ENCODE measurements at regions of chr9 and their contacts with region 1.

Region 1: DNA sequence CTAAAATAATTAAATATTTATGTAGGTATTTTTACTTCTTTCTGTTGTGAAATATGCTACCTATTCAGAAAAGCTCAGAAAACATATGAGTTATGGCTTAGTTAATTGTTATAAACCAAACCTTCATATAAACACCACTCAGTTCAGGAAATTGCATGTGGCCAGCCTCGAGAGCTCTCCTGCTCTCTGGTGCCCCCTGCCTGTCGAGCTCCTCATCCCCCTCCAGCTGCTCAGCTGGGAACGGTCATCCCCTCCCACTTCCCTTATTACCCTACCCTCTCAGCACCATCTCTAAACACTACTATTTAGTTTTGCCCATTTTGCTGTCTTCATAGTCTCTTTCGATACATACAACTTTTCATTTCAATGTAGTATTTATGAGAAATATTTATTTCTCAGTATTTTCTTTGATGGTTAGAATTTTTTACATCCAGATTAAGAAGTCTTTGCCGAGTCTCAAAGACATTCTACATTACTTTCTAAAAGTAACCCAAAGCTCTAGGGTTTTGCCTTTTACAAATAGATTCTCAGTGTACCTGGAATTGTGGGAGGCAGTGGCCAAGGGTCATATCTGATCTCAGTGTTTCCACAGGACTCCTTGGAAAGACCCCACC is 51.2 kb upstream of the SEMA4D start:
- DNase-seq: peak; percentile 75 to 93 (median 84)
- ATAC-seq: peak; percentile 99
- H3K4me3 ChIP-seq: no peak overlapping the region
- H3K4me3 Mint-ChIP-seq: no peak overlapping the region
- H3K27ac ChIP-seq: no peak overlapping the region
- H3K27ac Mint-ChIP-seq: peak overlapping the region; percentile 40
- H3K4me1 ChIP-seq: peaks cover 15% of the 10 kb centered on the region
- H3K4me1 Mint-ChIP-seq: peaks cover 26% of the 10 kb centered on the region
- H3K27me3 ChIP-seq: no peaks in the 10 kb centered on the region
- H3K27me3 Mint-ChIP-seq: no peaks in the 10 kb centered on the region
- CTCF ChIP-seq: peak; percentile 99

Region 2: GRCh38 chr9:89375191-89375760 is 173.9 kb before region 1 on chr9:
- CTCF ChIA-PET with region 1: interaction called, 11 read pairs
- POLR2A ChIA-PET with region 1: interaction called, 3 read pairs
- intact Hi-C with region 1: loop called (anchors 1 to 2 kb)
- DNase-seq: peak in 3 of 14 experiments; percentile 32 to 66 (median 40)
- ATAC-seq: no peak
- H3K4me3 ChIP-seq: no peak overlapping the region
- H3K4me3 Mint-ChIP-seq: no peak overlapping the region
- H3K27ac ChIP-seq: peak overlapping the region; percentile 27 to 35
- H3K27ac Mint-ChIP-seq: peak overlapping the region; percentile 71
- H3K4me1 ChIP-seq: peaks cover 49% of the 10 kb centered on the region
- H3K4me1 Mint-ChIP-seq: peaks cover 33% of the 10 kb centered on the region
- H3K27me3 ChIP-seq: no peaks in the 10 kb centered on the region
- H3K27me3 Mint-ChIP-seq: no peaks in the 10 kb centered on the region
- CTCF ChIP-seq: no peak

Region 3: DNA sequence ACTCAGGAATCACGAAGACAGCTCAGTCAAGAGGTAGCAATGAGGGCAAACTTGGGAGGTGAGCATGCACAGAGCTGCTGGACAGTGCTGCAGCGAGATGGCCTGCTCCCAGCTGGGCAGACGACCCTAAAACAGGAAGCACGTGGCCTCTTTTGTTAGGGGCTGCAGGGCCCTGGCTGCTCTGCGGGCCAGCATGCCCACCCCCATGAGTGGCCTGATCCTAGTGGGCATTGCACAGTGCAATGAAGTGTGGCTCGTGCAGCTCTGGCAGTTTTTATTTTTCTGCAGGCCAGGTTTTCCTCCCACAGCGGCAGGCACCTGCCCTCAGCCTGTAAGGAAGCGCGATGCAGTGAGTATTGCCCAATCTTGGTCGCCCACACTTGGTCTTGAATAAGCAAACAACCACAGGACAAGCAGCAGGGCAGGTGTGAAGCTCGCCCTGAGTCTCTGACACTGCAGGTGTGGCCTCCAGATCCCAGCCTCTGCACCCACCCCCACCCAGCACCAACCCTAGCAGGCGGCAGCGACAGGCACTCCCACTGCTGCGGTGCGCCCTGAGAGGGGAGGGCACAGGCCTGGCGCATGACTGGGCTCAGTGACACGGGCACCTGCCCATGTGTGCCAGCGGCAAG is 112.0 kb before region 1 on chr9:
- CTCF ChIA-PET with region 1: interaction called, 156 read pairs
- POLR2A ChIA-PET with region 1: interaction called, 3 read pairs
- intact Hi-C with region 1: no loop called
- DNase-seq: peak; percentile 37 to 90 (median 66)
- ATAC-seq: peak; percentile 92
- H3K4me3 ChIP-seq: peak overlapping the region; percentile 6
- H3K4me3 Mint-ChIP-seq: peak overlapping the region; percentile 82
- H3K27ac ChIP-seq: peak overlapping the region; percentile 0 to 57
- H3K27ac Mint-ChIP-seq: peak overlapping the region; percentile 96
- H3K4me1 ChIP-seq: peaks cover 99% of the 10 kb centered on the region
- H3K4me1 Mint-ChIP-seq: peaks cover 92% of the 10 kb centered on the region
- H3K27me3 ChIP-seq: no peaks in the 10 kb centered on the region
- H3K27me3 Mint-ChIP-seq: no peaks in the 10 kb centered on the region
- CTCF ChIP-seq: no peak

Region 4: GRCh38 chr9:89461265-89461664 is 87.9 kb before region 1 on chr9:
- CTCF ChIA-PET with region 1: interaction called, 20 read pairs
- POLR2A ChIA-PET with region 1: interaction called, 24 read pairs
- intact Hi-C with region 1: no loop called
- DNase-seq: peak in 4 of 14 experiments; percentile 28 to 63 (median 56)
- ATAC-seq: peak; percentile 14
- H3K4me3 ChIP-seq: no peak overlapping the region
- H3K4me3 Mint-ChIP-seq: peak overlapping the region; percentile 71
- H3K27ac ChIP-seq: peak overlapping the region; percentile 50 to 62
- H3K27ac Mint-ChIP-seq: peak overlapping the region; percentile 96
- H3K4me1 ChIP-seq: peaks cover 97% of the 10 kb centered on the region
- H3K4me1 Mint-ChIP-seq: peaks cover 97% of the 10 kb centered on the region
- H3K27me3 ChIP-seq: no peaks in the 10 kb centered on the region
- H3K27me3 Mint-ChIP-seq: no peaks in the 10 kb centered on the region
- CTCF ChIP-seq: no peak

Region 5: DNA sequence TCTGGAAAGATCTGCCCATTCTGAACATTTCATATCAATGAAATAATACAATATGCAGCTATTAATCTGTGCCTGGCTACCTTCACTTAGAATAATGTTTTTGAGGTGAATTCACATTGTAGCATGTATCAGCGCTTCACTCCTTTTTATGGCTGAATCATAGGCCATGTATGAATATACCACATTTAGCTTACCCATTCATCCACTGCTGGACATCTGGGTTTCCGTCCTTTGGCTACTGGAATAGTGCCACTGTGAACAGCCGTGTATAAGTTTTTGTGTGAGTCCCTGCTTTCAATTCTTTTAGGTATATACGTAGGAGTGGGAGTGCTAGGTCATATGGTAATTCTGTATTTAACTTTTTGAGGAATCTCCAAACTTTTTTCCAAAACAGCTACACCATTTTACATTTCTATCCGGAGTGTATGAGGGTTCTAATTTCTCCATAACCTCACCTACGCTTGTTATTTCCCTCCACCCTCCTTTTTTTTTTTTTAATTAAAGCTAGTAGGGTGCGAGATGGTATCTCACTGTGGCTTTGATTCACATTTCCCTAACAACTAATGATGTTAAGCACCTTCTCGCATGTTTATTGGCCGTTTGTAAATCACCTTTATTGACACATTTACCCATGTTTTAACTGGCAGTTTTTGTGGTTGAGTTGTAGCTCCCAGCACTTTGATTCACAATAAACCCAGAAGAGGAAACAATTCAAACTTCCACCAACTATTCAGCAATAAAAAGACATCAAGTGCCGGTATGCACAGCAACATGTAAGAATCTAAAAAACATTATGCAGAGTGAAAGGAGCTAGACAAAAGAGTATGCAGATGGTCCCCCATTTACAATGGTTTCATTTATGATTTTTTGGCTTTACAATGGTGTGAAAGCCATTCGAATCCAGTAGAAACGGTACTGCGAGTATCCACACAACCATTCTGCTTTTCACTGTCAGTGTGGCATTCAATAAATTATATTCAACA is 59.3 kb before region 1 on chr9:
- CTCF ChIA-PET with region 1: interaction called, 17 read pairs
- POLR2A ChIA-PET with region 1: interaction called, 17 read pairs
- intact Hi-C with region 1: loop called in 1 of 2 experiments (anchors 2 kb)
- DNase-seq: peak in 4 of 14 experiments; percentile 33 to 92 (median 89)
- ATAC-seq: peak; percentile 84
- H3K4me3 ChIP-seq: peak overlapping the region; percentile 0
- H3K4me3 Mint-ChIP-seq: peak overlapping the region; percentile 76
- H3K27ac ChIP-seq: peak overlapping the region; percentile 65 to 67
- H3K27ac Mint-ChIP-seq: peak overlapping the region; percentile 88
- H3K4me1 ChIP-seq: peaks cover 76% of the 10 kb centered on the region
- H3K4me1 Mint-ChIP-seq: peaks cover 92% of the 10 kb centered on the region
- H3K27me3 ChIP-seq: no peaks in the 10 kb centered on the region
- H3K27me3 Mint-ChIP-seq: no peaks in the 10 kb centered on the region
- CTCF ChIP-seq: no peak

Region 6: DNA sequence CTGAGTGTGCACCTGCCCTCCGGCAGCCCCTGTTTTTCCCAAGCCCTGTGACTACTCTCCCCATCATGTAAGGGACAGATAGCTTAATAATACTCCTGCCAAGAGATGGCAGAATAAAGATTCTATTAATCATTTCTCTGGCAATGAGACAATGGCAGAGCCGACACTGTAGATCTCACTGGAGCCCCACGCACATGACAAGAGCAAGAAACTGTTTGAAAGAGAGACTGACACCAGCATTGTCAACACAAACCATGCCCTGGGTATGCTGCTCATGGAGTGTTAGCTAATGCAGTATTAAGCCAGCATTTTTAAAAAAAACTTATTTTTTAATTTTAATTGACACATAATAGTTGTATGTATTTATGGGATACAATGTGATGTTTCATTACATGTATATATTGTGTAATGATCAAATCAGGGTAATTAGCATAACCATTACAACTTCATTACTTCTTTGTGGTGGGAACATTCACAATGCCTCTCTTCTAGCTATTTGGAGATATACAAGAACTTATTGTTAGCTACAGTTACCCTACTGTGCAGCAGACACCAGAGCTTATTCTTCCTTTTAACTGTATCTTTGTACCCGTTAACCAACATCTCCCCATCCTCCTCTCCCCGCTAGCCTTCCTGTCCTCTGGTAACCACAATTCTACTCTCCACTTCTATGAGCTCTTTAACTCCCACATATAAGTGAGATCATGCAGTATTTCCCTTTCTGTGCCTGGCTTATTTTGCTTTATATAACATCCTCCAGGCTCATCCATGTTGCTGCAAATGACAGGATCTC is 19.7 kb before region 1 on chr9:
- CTCF ChIA-PET with region 1: interaction called, 31 read pairs
- POLR2A ChIA-PET with region 1: interaction called, 11 read pairs
- intact Hi-C with region 1: loop called in 1 of 2 experiments (anchors 2 kb)
- DNase-seq: peak in 4 of 14 experiments; percentile 51 to 73 (median 52)
- ATAC-seq: peak; percentile 83
- H3K4me3 ChIP-seq: no peak overlapping the region
- H3K4me3 Mint-ChIP-seq: peak overlapping the region; percentile 36
- H3K27ac ChIP-seq: peak overlapping the region; percentile 23 to 27
- H3K27ac Mint-ChIP-seq: peak overlapping the region; percentile 94
- H3K4me1 ChIP-seq: peaks cover 98% of the 10 kb centered on the region
- H3K4me1 Mint-ChIP-seq: peaks cover 96% of the 10 kb centered on the region
- H3K27me3 ChIP-seq: no peaks in the 10 kb centered on the region
- H3K27me3 Mint-ChIP-seq: no peaks in the 10 kb centered on the region
- CTCF ChIP-seq: no peak

Region 7: DNA sequence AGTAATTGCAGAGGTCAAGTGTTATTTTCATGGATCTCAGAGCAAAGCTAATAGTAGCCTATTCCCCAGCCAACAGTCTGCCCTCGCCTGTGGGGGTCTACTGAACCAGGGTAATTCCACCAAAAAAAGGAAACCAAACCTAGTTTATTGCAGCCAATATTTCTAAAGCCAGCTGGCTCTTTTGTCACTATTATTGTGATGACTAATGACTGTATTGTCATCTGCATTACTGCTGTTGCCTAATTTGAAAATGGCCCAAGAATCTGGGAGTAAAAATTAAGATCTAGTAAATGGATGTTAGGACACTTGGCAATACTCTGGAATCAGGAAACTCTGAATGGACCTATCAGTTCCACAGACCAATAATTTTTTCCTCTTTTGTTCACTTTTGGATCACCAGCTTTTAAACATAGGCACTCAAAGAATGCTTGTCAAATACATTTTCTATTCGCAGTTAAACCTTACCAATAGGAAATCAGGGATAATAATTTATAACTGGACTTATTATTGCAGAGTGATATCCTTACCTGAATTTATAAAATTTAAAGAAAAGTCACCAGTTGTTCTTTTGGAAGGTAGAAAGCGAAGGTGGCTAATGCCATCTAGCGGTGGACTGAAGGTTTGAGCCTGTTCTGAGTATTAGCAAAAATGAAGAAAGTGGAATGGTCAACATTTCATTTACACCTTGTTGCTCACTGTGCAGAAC is 1321.6 kb after region 1 on chr9:
- CTCF ChIA-PET with region 1: no interaction called
- POLR2A ChIA-PET with region 1: no interaction called
- intact Hi-C with region 1: no loop called
- DNase-seq: peak in 12 of 14 experiments; percentile 4 to 72 (median 16)
- ATAC-seq: no peak
- H3K4me3 ChIP-seq: no peak overlapping the region
- H3K4me3 Mint-ChIP-seq: no peak overlapping the region
- H3K27ac ChIP-seq: no peak overlapping the region
- H3K27ac Mint-ChIP-seq: no peak overlapping the region
- H3K4me1 ChIP-seq: no peaks in the 10 kb centered on the region
- H3K4me1 Mint-ChIP-seq: no peaks in the 10 kb centered on the region
- H3K27me3 ChIP-seq: no peaks in the 10 kb centered on the region
- H3K27me3 Mint-ChIP-seq: peaks cover 17% of the 10 kb centered on the region
- CTCF ChIP-seq: peak; percentile 98